AG04449 (cell line): ENCODE measurements at regions of chr3 and their contacts with region 1.

Region 1: DNA sequence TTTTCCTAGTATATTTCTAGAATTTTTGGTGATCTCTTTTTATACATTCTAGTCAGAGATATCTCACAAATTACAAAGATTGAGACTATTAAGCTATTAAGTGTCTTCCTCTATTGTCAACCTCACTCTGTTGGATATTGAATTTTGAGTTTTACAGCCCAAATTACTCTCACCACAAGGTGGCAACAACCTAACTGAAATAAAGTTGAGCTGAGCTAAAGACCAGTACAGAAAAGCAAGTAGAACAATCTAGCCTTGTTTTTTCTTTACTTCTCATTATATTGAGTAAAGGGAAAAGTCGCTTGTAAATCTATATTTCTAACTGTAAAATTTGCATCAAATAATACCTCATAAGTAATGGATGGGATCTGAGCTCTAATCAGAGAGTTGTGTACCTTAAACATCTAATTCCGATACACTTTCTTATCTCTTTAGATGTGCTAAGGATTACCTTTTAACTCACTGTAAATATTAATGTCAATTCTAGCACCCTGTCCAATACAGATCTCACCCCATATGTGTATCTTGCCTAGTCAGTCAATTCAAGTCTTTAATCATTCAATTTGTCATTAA is 13.6 kb upstream of the COMMD2 start:
- DNase-seq: no peak
- H3K4me3 ChIP-seq: no peak overlapping the region
- CTCF ChIP-seq: peak; percentile 54

Region 2: DNA sequence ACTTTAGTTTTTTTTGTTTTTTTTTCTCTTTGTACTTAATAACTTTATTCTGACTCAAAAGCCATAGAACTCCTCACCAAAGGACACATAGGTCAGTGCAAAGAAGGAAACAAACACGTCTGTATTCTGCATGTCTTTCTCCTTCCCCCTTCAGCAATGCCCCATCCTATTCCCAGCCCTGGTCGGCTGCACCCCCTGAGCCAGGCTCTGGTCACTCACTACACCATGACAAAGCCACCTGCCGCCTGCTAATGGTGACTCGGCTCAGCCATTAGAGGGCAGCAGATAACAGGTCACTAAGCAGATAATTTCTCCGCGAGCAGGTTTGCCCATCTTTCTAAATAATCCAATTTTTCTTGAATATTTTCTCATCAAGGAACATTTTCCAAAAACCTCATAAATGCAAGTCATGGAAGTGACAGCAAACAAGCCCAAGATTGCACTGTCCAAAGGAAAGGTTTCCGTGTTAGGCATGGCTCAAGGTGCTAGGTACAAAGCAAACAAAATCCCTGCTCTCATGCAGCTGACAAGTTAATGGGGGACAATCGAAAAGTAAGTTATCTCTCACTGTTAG is 253.6 kb before region 1 on chr3:
- CTCF ChIA-PET with region 1: interaction called, 92 read pairs
- POLR2A ChIA-PET with region 1: no interaction called
- DNase-seq: no peak
- H3K4me3 ChIP-seq: no peak overlapping the region
- CTCF ChIP-seq: peak; percentile 75

Region 3: DNA sequence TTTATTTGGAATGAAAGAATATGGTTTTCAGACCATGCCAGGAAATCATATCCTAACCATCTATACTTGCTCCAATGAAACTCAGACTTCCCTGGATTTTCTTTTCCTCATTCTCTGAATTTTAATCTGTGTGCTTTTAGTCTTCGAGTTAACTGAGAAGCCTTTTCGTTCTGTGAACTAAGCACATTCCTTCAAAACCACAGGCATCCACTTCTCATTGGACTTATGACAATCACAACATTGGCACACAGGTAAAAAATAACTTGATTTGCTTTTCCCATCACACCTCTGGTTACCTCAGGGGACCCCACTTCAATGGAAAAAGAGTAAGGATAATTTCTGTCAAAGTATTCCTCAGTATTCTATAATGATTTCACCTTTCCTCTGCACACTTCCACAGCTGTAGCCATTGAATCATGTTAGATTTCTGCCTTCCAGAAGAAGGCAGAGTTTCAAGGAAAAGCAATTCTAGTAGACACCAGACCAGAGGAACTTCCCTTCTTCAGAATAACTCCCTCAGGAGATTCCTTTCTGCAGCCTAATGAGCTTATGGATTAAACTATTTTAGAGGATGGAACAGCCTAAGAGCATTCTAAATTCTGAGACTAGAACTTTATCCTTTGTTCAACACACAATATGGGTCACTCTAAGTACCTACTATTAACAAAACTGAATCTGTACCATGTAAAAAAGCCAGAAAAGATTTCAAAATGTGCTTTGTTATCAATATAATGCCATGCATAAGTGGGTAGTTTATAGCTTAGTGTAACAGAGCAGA is 29.5 kb before region 1 on chr3:
- CTCF ChIA-PET with region 1: interaction called, 15 read pairs
- POLR2A ChIA-PET with region 1: no interaction called
- DNase-seq: peak; percentile 17
- H3K4me3 ChIP-seq: no peak overlapping the region
- CTCF ChIP-seq: no peak

Region 4: GRCh38 chr3:149752051-149752787 is 13.6 kb before region 1 on chr3 and contains the start of gene COMMD2:
- CTCF ChIA-PET with region 1: interaction called, 45 read pairs
- POLR2A ChIA-PET with region 1: no interaction called
- DNase-seq: no peak
- H3K4me3 ChIP-seq: peak within 1 kb of the TSS; percentile 98
- CTCF ChIP-seq: no peak

Region 5: DNA sequence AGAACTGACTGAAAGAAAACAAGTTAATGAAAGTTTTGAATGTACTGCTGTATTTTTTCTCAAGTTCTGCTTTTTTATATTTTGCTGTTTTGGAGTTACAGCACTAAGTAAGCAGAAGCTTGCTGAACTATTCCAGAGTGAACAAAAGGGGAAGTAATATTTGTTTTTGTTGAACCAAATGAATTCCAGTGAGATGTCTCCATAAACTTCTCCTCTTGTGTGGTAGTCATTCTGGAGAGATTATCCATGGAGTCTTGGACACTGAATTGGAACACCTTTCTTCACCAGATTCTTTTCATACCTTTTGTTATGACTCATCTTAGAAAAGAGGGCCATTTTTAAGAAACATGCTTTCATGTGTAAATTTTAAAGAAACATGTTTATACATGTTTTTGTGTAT is 17.7 kb after region 1 on chr3:
- CTCF ChIA-PET with region 1: interaction called, 63 read pairs
- POLR2A ChIA-PET with region 1: no interaction called
- DNase-seq: peak; percentile 59
- H3K4me3 ChIP-seq: no peak overlapping the region
- CTCF ChIP-seq: no peak

Region 6: DNA sequence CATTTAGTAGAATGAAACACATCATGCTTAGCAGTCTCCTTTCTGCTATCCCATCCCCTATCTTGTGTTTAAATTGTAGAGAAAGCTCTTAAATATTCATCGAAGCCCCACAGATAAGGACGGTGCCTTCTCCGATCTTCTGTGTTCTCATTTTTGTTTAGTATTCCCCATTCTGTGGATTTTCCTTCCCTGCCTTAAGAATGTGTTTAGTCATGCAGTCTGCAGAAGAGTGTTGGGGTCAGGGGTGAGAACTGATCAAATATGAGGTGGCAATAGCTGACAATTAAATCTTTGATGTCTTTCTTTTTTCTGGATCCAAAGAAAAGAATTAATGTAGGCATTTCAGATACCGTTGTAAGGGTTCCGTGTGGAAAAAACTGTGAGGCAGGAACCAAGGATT is 35.8 kb after region 1 on chr3:
- CTCF ChIA-PET with region 1: interaction called, 369 read pairs
- POLR2A ChIA-PET with region 1: no interaction called
- DNase-seq: no peak
- H3K4me3 ChIP-seq: no peak overlapping the region
- CTCF ChIP-seq: no peak

Region 7: GRCh38 chr3:149954812-149955211 is 189.0 kb after region 1 on chr3:
- CTCF ChIA-PET with region 1: no interaction called
- POLR2A ChIA-PET with region 1: no interaction called
- DNase-seq: no peak
- H3K4me3 ChIP-seq: no peak overlapping the region
- CTCF ChIP-seq: no peak

Region 8: GRCh38 chr3:150216041-150216811 is 450.4 kb after region 1 on chr3:
- CTCF ChIA-PET with region 1: interaction called, 11 read pairs
- POLR2A ChIA-PET with region 1: no interaction called
- DNase-seq: peak; percentile 68
- H3K4me3 ChIP-seq: no peak overlapping the region
- CTCF ChIP-seq: no peak